CD4-positive, alpha-beta memory T cell (primary cell): ENCODE measurements at regions of chr6 and their contacts with region 1.

Region 1: GRCh38 chr6:3157131-3157927 is at the start of gene TUBB2A:
- DNase-seq: peak; percentile 83 to 95 (median 91)
- H3K4me3 ChIP-seq: peak within 1 kb of the TSS; percentile 49 to 81
- H3K4me3 Mint-ChIP-seq: peak within 1 kb of the TSS; percentile 88 to 95 (median 92)
- H3K27ac ChIP-seq: peak within 1 kb of the TSS; percentile 81
- H3K27ac Mint-ChIP-seq: peak within 1 kb of the TSS; percentile 86 to 97 (median 94)
- H3K4me1 ChIP-seq: peaks cover 30% of the 10 kb centered on the region
- H3K4me1 Mint-ChIP-seq: peaks cover 21 to 44% (median 32%) of the 10 kb centered on the region in 4 donors
- H3K27me3 ChIP-seq: no peaks in the 10 kb centered on the region
- H3K27me3 Mint-ChIP-seq: no peaks in the 10 kb centered on the region
- total RNA-seq, gene TUBB2A: 5.2 to 5.4 TPM

Region 2: GRCh38 chr6:2524090-2524489 is 633.2 kb before region 1 on chr6:
- CTCF ChIA-PET with region 1: no interaction called
- POLR2A ChIA-PET with region 1: no interaction called
- intact Hi-C with region 1: no loop called
- DNase-seq: no peak
- H3K4me3 ChIP-seq: no peak overlapping the region
- H3K4me3 Mint-ChIP-seq: no peak overlapping the region
- H3K27ac ChIP-seq: no peak overlapping the region
- H3K27ac Mint-ChIP-seq: no peak overlapping the region
- H3K4me1 ChIP-seq: peaks cover 7% of the 10 kb centered on the region
- H3K4me1 Mint-ChIP-seq: peaks cover 6 to 10% (median 8%) of the 10 kb centered on the region in 4 donors
- H3K27me3 ChIP-seq: no peaks in the 10 kb centered on the region
- H3K27me3 Mint-ChIP-seq: peaks cover 15% of the 10 kb centered on the region in 2 donors

Region 3: GRCh38 chr6:3118353-3119039 is 38.8 kb before region 1 on chr6 and contains the start of gene BPHL:
- CTCF ChIA-PET with region 1: interaction called, 4 read pairs
- POLR2A ChIA-PET with region 1: interaction called, 5 read pairs
- intact Hi-C with region 1: loop called (anchors 1 kb)
- DNase-seq: peak; percentile 98 to 100 (median 99)
- H3K4me3 ChIP-seq: peak within 1 kb of the TSS; percentile 76 to 94
- H3K4me3 Mint-ChIP-seq: peak within 1 kb of the TSS; percentile 75 to 96 (median 91)
- H3K27ac ChIP-seq: peak within 1 kb of the TSS; percentile 87
- H3K27ac Mint-ChIP-seq: peak within 1 kb of the TSS; percentile 93 to 97 (median 96)
- H3K4me1 ChIP-seq: peaks cover 14% of the 10 kb centered on the region
- H3K4me1 Mint-ChIP-seq: peaks cover 7 to 20% (median 14%) of the 10 kb centered on the region in 4 donors
- H3K27me3 ChIP-seq: no peaks in the 10 kb centered on the region
- H3K27me3 Mint-ChIP-seq: no peaks in the 10 kb centered on the region
- total RNA-seq, gene BPHL: 11.9 to 13.7 TPM

Region 4: GRCh38 chr6:3125815-3126214 is 31.5 kb before region 1 on chr6:
- CTCF ChIA-PET with region 1: interaction called, 6 read pairs
- POLR2A ChIA-PET with region 1: no interaction called
- intact Hi-C with region 1: loop called (anchors 1 kb)
- DNase-seq: no peak
- H3K4me3 ChIP-seq: no peak overlapping the region
- H3K4me3 Mint-ChIP-seq: no peak overlapping the region
- H3K27ac ChIP-seq: no peak overlapping the region
- H3K27ac Mint-ChIP-seq: no peak overlapping the region
- H3K4me1 ChIP-seq: no peaks in the 10 kb centered on the region
- H3K4me1 Mint-ChIP-seq: peaks cover 0 to 4% (median 0%) of the 10 kb centered on the region in 4 donors
- H3K27me3 ChIP-seq: no peaks in the 10 kb centered on the region
- H3K27me3 Mint-ChIP-seq: no peaks in the 10 kb centered on the region

Region 5: GRCh38 chr6:3180350-3180749 is 23.0 kb after region 1 on chr6:
- CTCF ChIA-PET with region 1: interaction called, 4 read pairs
- POLR2A ChIA-PET with region 1: no interaction called
- intact Hi-C with region 1: loop called (anchors 1 kb)
- DNase-seq: no peak
- H3K4me3 ChIP-seq: no peak overlapping the region
- H3K4me3 Mint-ChIP-seq: no peak overlapping the region
- H3K27ac ChIP-seq: no peak overlapping the region
- H3K27ac Mint-ChIP-seq: no peak overlapping the region
- H3K4me1 ChIP-seq: no peaks in the 10 kb centered on the region
- H3K4me1 Mint-ChIP-seq: no peaks in the 10 kb centered on the region
- H3K27me3 ChIP-seq: no peaks in the 10 kb centered on the region
- H3K27me3 Mint-ChIP-seq: peaks cover 6 to 10% of the 10 kb centered on the region in 2 donors

Region 6: GRCh38 chr6:3258720-3259490 is 101.6 kb after region 1 on chr6 and contains the start of gene PSMG4:
- CTCF ChIA-PET with region 1: interaction called, 9 read pairs
- POLR2A ChIA-PET with region 1: interaction called, 10 read pairs
- intact Hi-C with region 1: loop called (anchors 2 kb)
- DNase-seq: peak; percentile 87 to 92 (median 88)
- H3K4me3 ChIP-seq: peak within 1 kb of the TSS; percentile 44 to 67
- H3K4me3 Mint-ChIP-seq: peak within 1 kb of the TSS; percentile 93 to 99 (median 96)
- H3K27ac ChIP-seq: peak within 1 kb of the TSS; percentile 70
- H3K27ac Mint-ChIP-seq: peak within 1 kb of the TSS; percentile 92 to 99 (median 95)
- H3K4me1 ChIP-seq: peaks cover 45% of the 10 kb centered on the region
- H3K4me1 Mint-ChIP-seq: peaks cover 21 to 49% (median 37%) of the 10 kb centered on the region in 4 donors
- H3K27me3 ChIP-seq: no peaks in the 10 kb centered on the region
- H3K27me3 Mint-ChIP-seq: no peaks in the 10 kb centered on the region
- total RNA-seq, gene PSMG4: 41.0 to 41.6 TPM